Adrenal gland (tissue), 19 donors: ENCODE measurements at regions of chr6 and their contacts with region 1.

Region 1: GRCh38 chr6:77457720-77458349 is 5.5 kb downstream of the HTR1B start:
- DNase-seq: peak; percentile 69 to 93 (median 82)
- H3K4me3 ChIP-seq: no peak overlapping the region
- H3K27ac ChIP-seq: no peak overlapping the region
- H3K4me1 ChIP-seq: peaks cover 0 to 9% of the 10 kb centered on the region in 2 donors
- H3K27me3 ChIP-seq: peaks cover 12% of the 10 kb centered on the region
- CTCF ChIP-seq: peak; percentile 60 to 83 (median 74)
- POLR2A ChIP-seq: no peak

Region 2: DNA sequence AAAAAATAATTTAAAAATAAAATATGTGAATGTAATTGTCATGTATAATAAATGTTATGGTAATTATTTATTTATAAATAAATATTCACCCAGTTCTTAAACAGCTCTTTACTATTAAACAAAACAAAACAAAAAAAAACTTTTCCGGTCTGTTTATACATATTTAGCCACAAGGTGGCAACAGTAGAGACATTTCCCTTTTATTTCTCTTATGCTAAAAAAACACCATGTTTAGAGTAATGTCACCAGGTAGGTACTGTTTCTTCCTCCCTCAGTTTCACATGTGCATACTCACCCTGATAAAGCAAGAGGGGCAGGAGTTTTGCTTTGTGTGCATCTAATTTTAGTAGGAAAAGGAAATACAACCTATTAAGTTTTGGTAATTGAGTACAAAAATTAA is 775.0 kb before region 1 on chr6:
- intact Hi-C with region 1: loop called in 1 of 2 experiments (anchors 5 kb)
- DNase-seq: no peak
- H3K4me3 ChIP-seq: no peak overlapping the region
- H3K27ac ChIP-seq: no peak overlapping the region
- H3K4me1 ChIP-seq: no peaks in the 10 kb centered on the region
- H3K27me3 ChIP-seq: no peaks in the 10 kb centered on the region
- CTCF ChIP-seq: peak; percentile 29 to 67 (median 42)
- POLR2A ChIP-seq: no peak